Astrocyte of the cerebellum (primary cell): ENCODE measurements at regions of chr4 and their contacts with region 1.

Region 1: GRCh38 chr4:106579236-106579635 is 210.7 kb upstream of the GIMD1 start:
- DNase-seq: no peak
- H3K4me3 ChIP-seq: no peak overlapping the region
- CTCF ChIP-seq: no peak

Region 2: GRCh38 chr4:106409893-106410889 is 169.0 kb before region 1 on chr4:
- in situ Hi-C with region 1: no loop called
- DNase-seq: no peak
- H3K4me3 ChIP-seq: no peak overlapping the region
- CTCF ChIP-seq: no peak

Region 3: GRCh38 chr4:106529348-106530023 is 49.8 kb before region 1 on chr4:
- in situ Hi-C with region 1: no loop called
- DNase-seq: peak; percentile 23
- H3K4me3 ChIP-seq: no peak overlapping the region
- CTCF ChIP-seq: no peak

Region 4: GRCh38 chr4:106629268-106629625 is 50.0 kb after region 1 on chr4:
- in situ Hi-C with region 1: no loop called
- DNase-seq: no peak
- H3K4me3 ChIP-seq: no peak overlapping the region
- CTCF ChIP-seq: no peak

Region 5: DNA sequence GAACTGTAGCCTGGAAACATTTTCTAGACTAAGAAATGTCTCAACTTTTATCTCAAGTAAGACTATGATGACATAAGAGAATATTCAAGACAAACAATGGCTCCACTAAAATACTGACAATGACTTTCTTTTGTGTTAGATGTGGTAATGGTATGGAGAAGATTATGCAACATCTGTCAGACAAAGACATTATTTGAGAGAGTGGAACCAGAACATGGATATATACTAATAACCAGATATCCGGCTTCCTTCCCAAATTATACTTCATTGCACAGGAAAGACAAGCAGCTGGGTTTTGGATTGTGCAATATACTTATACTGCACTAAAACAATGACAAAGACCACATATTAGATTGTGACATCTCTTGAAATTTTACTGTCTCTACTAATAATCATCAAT is 80.1 kb after region 1 on chr4:
- in situ Hi-C with region 1: loop called (anchors 5 kb)
- DNase-seq: no peak
- H3K4me3 ChIP-seq: no peak overlapping the region
- CTCF ChIP-seq: no peak